ENCODE measurements at regions of chr6 and their contacts with region 1.

Region 1: GRCh38 chr6:111565326-111566221 is 40.1 kb downstream of the TRAF3IP2 start:
- DNase-seq: no peak
- H3K4me3 ChIP-seq: no peak overlapping the region
- H3K27ac ChIP-seq: peak overlapping the region; percentile 94
- H3K4me1 ChIP-seq: peaks cover 52% of the 10 kb centered on the region
- H3K27me3 ChIP-seq: no peaks in the 10 kb centered on the region
- CTCF ChIP-seq: no peak
- POLR2A ChIP-seq: no peak

Region 2: DNA sequence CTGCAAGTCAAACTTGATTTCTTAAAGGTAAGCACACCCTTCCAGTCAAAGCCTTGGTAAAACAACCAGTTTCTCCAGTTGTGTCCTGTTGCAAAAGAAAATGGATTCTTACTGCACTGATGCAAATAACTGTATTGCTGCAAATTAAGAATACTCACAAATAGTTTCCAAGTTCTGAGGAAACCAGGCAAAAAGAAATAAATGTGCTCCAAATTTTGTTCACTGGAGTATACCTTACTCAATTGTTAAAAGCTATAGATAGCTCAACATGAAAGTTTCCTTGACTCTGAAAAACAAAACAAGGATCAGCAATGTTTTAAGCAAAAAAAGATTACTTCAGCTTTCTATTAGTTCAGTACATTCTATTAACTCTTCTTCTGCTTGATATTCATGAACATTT is 403.1 kb before region 1 on chr6:
- CTCF ChIA-PET with region 1: no interaction called
- POLR2A ChIA-PET with region 1: no interaction called
- dilution Hi-C with region 1: no loop called
- intact Hi-C with region 1: no loop called
- DNase-seq: no peak
- H3K4me3 ChIP-seq: no peak overlapping the region
- H3K27ac ChIP-seq: no peak overlapping the region
- H3K4me1 ChIP-seq: no peaks in the 10 kb centered on the region
- H3K27me3 ChIP-seq: peaks cover 4 to 5% of the 10 kb centered on the region in 2 experiments
- CTCF ChIP-seq: no peak
- POLR2A ChIP-seq: no peak

Region 3: GRCh38 chr6:111494951-111495635 is 70.5 kb before region 1 on chr6:
- CTCF ChIA-PET with region 1: interaction called, 3 read pairs
- POLR2A ChIA-PET with region 1: interaction called, 3 read pairs
- dilution Hi-C with region 1: no loop called
- intact Hi-C with region 1: loop called (anchors 5 kb)
- DNase-seq: peak; percentile 71
- H3K4me3 ChIP-seq: no peak overlapping the region
- H3K27ac ChIP-seq: peak overlapping the region; percentile 52
- H3K4me1 ChIP-seq: peaks cover 17% of the 10 kb centered on the region
- H3K27me3 ChIP-seq: no peaks in the 10 kb centered on the region
- CTCF ChIP-seq: no peak
- POLR2A ChIP-seq: no peak

Region 4: DNA sequence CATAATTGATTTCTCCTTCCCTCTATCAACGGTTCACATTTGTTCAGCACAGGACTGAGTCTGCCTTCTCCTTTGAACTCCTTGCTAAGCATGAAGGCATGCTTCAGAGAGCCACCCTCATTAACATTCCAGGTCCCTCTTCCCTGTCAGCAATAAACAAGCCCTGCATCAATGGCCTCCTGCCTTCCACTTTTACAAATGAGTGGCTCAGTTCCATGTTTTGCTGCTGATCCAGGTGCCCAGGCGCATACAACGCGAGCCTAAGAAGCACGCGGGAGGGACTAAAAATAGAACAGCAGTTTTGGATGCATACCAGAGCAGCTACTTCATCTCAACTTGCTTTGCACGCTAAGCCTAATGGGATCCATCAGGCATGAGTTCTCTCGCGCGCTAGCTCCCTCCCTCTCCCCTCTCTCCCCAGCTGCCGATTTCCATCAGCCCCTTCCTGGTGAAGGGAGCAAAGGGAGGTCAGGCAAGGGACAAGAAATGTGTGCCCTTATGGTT is 13.3 kb before region 1 on chr6:
- CTCF ChIA-PET with region 1: interaction called, 6 read pairs
- POLR2A ChIA-PET with region 1: no interaction called
- dilution Hi-C with region 1: no loop called
- intact Hi-C with region 1: loop called (anchors 1 kb)
- DNase-seq: peak; percentile 89
- H3K4me3 ChIP-seq: no peak overlapping the region
- H3K27ac ChIP-seq: peak overlapping the region; percentile 30
- H3K4me1 ChIP-seq: peaks cover 20% of the 10 kb centered on the region
- H3K27me3 ChIP-seq: no peaks in the 10 kb centered on the region
- CTCF ChIP-seq: no peak
- POLR2A ChIP-seq: no peak

Region 5: GRCh38 chr6:111605100-111605751 is 39.7 kb after region 1 on chr6:
- CTCF ChIA-PET with region 1: interaction called, 5 read pairs
- POLR2A ChIA-PET with region 1: no interaction called
- dilution Hi-C with region 1: no loop called
- intact Hi-C with region 1: loop called (anchors 1 kb)
- DNase-seq: peak; percentile 77
- H3K4me3 ChIP-seq: peak overlapping the region; percentile 37 to 44 (median 38)
- H3K27ac ChIP-seq: peak overlapping the region; percentile 92
- H3K4me1 ChIP-seq: peaks cover 59% of the 10 kb centered on the region
- H3K27me3 ChIP-seq: no peaks in the 10 kb centered on the region
- CTCF ChIP-seq: no peak
- POLR2A ChIP-seq: no peak

Region 6: GRCh38 chr6:111683749-111684267 is 118.2 kb after region 1 on chr6:
- CTCF ChIA-PET with region 1: no interaction called
- POLR2A ChIA-PET with region 1: no interaction called
- dilution Hi-C with region 1: no loop called
- intact Hi-C with region 1: loop called (anchors 5 kb)
- DNase-seq: peak; percentile 91
- H3K4me3 ChIP-seq: peak overlapping the region in 1 of 3 experiments; percentile 1
- H3K27ac ChIP-seq: peak overlapping the region; percentile 82
- H3K4me1 ChIP-seq: peaks cover 51% of the 10 kb centered on the region
- H3K27me3 ChIP-seq: no peaks in the 10 kb centered on the region
- CTCF ChIP-seq: no peak
- POLR2A ChIP-seq: no peak